Activated T-helper 1 cell treated with anti-CD3 and anti-CD28 coated beads, Interleukin-12 subunit alpha, Interleukin-12 subunit beta, Interleukin-2, Interleukin-4 antibody, amounts not matched to agents 30 ng/mL and 10 ng/mL and 1 ng/mL, durations not matched to agents 14 hours and 24 hours and 36 hours (primary cell): ENCODE measurements at regions of chr2 and their contacts with region 1.

Region 1: DNA sequence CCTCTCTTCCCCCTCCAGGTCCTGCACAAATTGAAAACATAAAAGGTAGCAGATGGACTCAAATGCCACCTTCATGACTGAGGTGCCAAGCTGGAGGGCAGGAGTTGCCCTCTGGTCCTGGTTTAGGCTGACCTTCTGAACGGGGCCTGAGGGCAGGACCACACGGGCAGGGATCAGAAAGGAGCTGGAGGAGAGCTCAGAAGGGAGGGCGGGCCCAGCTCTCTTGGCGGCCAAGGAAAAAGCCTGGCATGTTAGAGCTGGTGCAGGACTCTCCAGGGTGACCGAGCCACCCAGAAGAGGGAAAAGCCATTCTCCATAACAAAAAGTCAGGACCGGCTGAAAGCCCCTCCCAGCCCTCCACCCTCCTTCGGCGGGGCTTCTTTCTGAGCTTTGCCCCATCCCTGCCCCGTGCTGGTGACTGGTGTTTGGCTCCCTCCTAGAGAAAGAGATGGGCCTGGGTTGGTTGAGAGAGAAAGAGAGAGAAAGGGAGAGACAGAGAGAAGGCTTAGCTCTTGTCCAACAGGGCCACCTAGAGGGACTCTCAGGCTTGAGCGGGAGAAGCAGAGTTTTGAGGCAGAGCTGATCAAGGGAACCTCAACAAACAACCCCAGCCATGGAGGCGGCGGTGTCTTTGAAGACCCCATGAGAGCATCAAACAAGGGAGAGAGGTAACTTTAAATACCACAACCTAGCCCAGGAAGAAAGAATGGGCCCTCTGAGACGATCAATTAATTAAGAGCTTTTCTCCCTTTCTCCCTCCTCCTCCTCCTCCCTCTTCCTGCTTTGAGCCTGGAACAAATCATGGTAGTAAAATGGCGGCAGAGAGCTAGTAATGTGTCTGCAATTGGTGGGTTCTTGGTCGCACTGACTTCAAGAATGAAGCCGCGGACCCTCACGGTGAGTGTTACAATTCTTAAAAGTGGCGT is 50.8 kb downstream of the WIPF1 start:
- DNase-seq: peak; percentile 20
- H3K4me3 Mint-ChIP-seq: no peak overlapping the region
- H3K27ac Mint-ChIP-seq: no peak overlapping the region
- H3K4me1 Mint-ChIP-seq: peaks cover 6% of the 10 kb centered on the region
- H3K27me3 Mint-ChIP-seq: peaks cover 6% of the 10 kb centered on the region

Region 2: GRCh38 chr2:174522553-174522952 is 24.3 kb before region 1 on chr2:
- intact Hi-C with region 1: loop called (anchors 2 kb)
- DNase-seq: no peak
- H3K4me3 Mint-ChIP-seq: no peak overlapping the region
- H3K27ac Mint-ChIP-seq: no peak overlapping the region
- H3K4me1 Mint-ChIP-seq: peaks cover 18% of the 10 kb centered on the region
- H3K27me3 Mint-ChIP-seq: peaks cover 2% of the 10 kb centered on the region